ENCODE measurements at regions of chr9 and their contacts with region 1.

Region 1: GRCh38 chr9:133238851-133239532 is 29.9 kb upstream of the OBP2B start:
- DNase-seq: peak; percentile 80
- H3K4me3 Mint-ChIP-seq: peak overlapping the region; percentile 21
- H3K27ac Mint-ChIP-seq: no peak overlapping the region
- H3K4me1 Mint-ChIP-seq: peaks cover 3% of the 10 kb centered on the region
- H3K27me3 Mint-ChIP-seq: peaks cover 9% of the 10 kb centered on the region

Region 2: DNA sequence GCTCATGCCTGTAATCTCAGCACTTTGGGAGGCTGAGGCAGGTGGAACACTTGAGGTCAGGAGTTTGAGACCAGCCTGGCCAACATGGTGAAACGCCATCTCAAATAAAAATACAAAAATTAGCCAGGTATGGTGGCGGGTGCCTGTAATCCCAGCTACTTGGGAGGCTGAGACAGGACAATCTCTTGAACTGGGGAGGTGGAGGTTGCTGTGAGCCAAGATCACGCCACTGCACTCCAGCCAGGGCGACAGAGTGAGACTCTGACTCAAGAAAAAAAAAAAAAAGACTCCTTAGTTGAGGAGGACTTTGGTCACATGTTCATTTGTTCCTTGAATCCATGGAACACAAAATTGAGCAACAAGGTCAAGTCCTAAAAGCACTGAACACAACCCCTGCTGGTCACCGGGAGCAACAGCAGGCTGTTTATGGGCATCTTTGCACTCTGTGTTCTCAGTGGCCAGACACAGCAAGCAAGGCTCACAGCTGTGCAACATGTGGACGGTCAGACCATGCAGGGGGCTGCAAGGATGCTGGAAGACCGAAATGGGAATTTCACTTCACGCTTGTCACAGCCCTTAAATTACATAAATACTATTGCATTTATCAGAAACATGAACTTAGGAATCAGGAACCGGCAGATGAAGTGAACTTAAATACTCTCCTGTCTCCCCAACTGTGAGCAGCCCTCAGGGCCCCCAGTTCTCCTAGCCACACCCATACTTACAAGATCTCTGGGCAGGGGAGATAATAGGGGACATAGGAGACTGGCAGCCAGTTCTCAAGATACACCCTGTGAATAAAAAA is 78.0 kb before region 1 on chr9:
- CTCF ChIA-PET with region 1: no interaction called
- POLR2A ChIA-PET with region 1: no interaction called
- intact Hi-C with region 1: no loop called
- DNase-seq: peak; percentile 56
- H3K4me3 Mint-ChIP-seq: no peak overlapping the region
- H3K27ac Mint-ChIP-seq: no peak overlapping the region
- H3K4me1 Mint-ChIP-seq: peaks cover 2% of the 10 kb centered on the region
- H3K27me3 Mint-ChIP-seq: no peaks in the 10 kb centered on the region

Region 3: GRCh38 chr9:133252301-133252780 is 13.3 kb after region 1 on chr9:
- CTCF ChIA-PET with region 1: interaction called, 10 read pairs
- POLR2A ChIA-PET with region 1: no interaction called
- intact Hi-C with region 1: no loop called
- DNase-seq: no peak
- H3K4me3 Mint-ChIP-seq: no peak overlapping the region
- H3K27ac Mint-ChIP-seq: no peak overlapping the region
- H3K4me1 Mint-ChIP-seq: peaks cover 4% of the 10 kb centered on the region
- H3K27me3 Mint-ChIP-seq: peaks cover 8% of the 10 kb centered on the region

Region 4: GRCh38 chr9:133327834-133328484 is 89.0 kb after region 1 on chr9:
- CTCF ChIA-PET with region 1: interaction called, 9 read pairs
- POLR2A ChIA-PET with region 1: no interaction called
- intact Hi-C with region 1: loop called (anchors 5 kb)
- DNase-seq: no peak
- H3K4me3 Mint-ChIP-seq: no peak overlapping the region
- H3K27ac Mint-ChIP-seq: no peak overlapping the region
- H3K4me1 Mint-ChIP-seq: peaks cover 7% of the 10 kb centered on the region
- H3K27me3 Mint-ChIP-seq: no peaks in the 10 kb centered on the region

Region 5: DNA sequence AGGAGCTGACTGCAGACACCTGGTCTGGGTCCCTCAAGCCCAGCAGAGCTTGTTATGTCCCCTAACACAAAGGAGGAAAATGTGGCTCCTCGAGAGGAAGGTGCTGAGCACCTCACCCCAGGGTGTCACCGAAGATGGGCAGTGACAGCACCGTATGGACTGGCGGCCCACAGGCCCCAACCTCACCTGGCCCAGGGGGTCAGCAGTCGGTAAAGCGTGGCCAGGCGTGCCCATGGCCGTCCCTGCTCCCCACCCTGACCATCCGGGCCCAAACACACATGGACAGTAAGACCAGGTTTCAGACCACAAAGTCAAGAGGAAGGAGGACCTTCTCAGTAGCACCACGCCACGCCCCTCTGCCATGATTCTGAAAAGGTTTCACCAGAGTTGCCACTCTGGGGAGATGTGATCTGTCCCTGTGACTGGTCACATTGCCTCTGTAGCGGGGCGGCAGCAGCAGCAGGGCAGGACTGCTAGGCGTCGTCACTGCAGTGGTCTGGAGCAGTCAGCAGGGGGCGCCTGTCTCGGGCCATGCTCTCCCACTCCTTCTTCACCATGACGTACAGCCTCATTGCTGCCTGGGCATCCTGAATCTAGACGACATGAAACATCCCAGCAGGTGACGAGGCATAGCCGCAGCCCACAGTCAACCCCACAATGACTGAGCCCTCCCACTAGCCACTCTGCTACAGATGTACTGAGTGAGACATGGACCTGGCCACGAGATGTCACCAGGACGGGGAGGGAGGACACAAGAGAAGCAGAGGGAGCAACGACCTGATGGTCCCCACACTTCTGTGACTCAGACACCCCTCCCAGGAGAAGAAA is 167.7 kb after region 1 on chr9:
- CTCF ChIA-PET with region 1: interaction called, 5 read pairs
- POLR2A ChIA-PET with region 1: no interaction called
- intact Hi-C with region 1: loop called (anchors 5 kb)
- DNase-seq: peak; percentile 92
- H3K4me3 Mint-ChIP-seq: no peak overlapping the region
- H3K27ac Mint-ChIP-seq: peak overlapping the region; percentile 83
- H3K4me1 Mint-ChIP-seq: peaks cover 14% of the 10 kb centered on the region
- H3K27me3 Mint-ChIP-seq: no peaks in the 10 kb centered on the region

Region 6: DNA sequence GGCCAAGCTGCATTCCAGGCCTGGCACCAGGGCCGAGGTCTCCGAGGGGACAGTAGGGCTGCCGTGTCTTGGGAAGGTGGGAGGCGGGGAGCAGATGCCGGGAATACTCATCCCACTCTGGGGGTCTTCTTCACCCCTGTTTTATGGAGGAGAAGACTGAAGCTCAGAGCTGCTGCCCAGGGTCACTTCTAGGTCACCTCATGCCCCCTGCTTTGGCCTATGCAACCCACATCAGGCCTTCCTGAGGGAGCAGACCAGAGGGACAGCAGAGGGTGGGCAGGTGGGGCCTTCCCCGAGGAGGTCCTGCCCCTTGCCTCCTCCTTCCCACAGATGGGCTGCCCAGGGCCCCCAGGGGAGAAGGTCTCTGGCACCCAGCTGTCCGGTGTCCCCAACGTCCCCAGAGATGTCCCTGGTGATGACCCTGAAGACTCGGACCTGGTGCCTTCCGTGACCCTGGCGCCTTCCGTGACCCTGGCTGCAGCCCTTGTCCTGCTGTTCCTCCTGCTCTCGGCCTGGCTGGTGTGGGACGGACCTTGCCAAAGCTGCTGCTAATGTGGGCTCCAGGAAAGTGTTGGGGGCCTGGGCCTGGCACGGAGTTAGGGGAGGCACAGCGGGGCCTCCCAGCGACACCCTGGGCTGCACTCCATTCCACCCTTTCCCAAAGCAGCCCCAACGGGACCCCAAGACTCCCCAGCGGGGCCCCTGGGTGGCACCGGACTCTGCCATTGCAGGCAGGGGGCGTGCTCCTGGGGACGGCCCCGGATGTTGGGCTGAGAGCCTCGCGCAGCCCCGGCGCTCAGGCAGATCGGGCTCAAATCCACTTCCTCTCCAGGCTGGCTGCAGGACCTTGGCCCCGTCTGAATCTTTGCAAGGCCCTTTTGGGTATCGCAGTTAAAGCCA is 246.6 kb after region 1 on chr9:
- CTCF ChIA-PET with region 1: interaction called, 7 read pairs
- POLR2A ChIA-PET with region 1: no interaction called
- intact Hi-C with region 1: loop called (anchors 2 kb)
- DNase-seq: no peak
- H3K4me3 Mint-ChIP-seq: no peak overlapping the region
- H3K27ac Mint-ChIP-seq: no peak overlapping the region
- H3K4me1 Mint-ChIP-seq: no peaks in the 10 kb centered on the region
- H3K27me3 Mint-ChIP-seq: peaks cover 14% of the 10 kb centered on the region

Measured in activated CD4-positive, alpha-beta memory T cell treated with anti-CD3 and anti-CD28 coated beads for 36 hours (primary cell).